PC-9 (cell line): ENCODE measurements at regions of chr12 and their contacts with region 1.

Region 1: DNA sequence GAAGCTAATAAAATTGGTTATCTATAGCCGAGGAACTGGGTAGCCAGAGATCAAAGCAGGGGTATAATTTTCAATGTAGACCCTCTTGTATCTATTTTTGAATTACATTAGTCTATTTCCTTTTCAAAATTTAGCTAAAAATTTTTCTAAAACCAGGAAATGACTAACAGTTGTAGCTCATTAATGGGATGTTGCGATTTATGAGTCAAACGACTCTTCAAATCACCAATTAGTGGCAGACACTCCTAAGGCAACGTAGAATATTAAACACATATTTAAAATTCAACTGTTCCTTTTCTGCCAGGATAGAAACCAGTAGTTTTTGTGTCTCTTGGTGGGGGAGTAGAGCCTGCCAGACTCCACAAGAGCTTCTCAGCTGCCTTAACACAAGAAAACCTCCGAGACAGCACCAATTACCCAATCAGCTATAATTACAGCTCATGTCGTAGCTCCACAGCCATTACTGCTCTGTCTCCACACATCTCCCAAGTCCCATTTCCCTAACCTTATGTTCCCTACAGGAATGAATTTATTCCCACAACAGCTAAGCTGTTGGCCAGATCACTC is 26.9 kb downstream of the GCN1 start:
- DNase-seq: no peak
- H3K4me3 ChIP-seq: no peak overlapping the region
- H3K27ac ChIP-seq: no peak overlapping the region
- H3K4me1 ChIP-seq: no peaks in the 10 kb centered on the region
- H3K27me3 ChIP-seq: no peaks in the 10 kb centered on the region
- CTCF ChIP-seq: no peak

Region 2: GRCh38 chr12:120019938-120020337 is 147.7 kb before region 1 on chr12:
- CTCF ChIA-PET with region 1: no interaction called
- POLR2A ChIA-PET with region 1: interaction called, 10 read pairs
- intact Hi-C with region 1: no loop called
- DNase-seq: no peak
- H3K4me3 ChIP-seq: no peak overlapping the region
- H3K27ac ChIP-seq: no peak overlapping the region
- H3K4me1 ChIP-seq: no peaks in the 10 kb centered on the region; the same call in 1 of the 2 replicates
- H3K27me3 ChIP-seq: no peaks in the 10 kb centered on the region
- CTCF ChIP-seq: no peak